AG04449 (cell line): ENCODE measurements at regions of chr3 and their contacts with region 1.

Region 1: GRCh38 chr3:36677331-36678007 is 86.9 kb downstream of the DCLK3 start:
- DNase-seq: peak; percentile 91
- H3K4me3 ChIP-seq: peak overlapping the region; percentile 39
- CTCF ChIP-seq: no peak

Region 2: DNA sequence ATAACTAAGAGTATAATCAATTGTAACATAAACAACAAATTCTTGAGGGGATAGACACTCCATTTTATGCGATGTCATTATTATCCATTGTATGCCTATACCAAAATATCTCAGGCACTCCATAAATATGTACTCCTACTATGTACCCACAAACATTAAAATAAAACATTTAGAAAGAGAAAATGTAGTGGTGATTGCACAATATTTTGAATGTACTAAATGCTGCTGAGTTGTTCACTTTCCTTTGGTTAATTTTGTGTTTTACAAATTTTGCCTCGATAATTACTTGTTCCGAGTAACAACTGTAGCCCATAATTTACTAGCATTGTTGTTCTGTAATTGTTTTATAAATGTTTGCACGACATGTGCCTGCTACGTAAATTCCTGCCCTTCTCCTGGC is 44.4 kb before region 1 on chr3:
- CTCF ChIA-PET with region 1: no interaction called
- POLR2A ChIA-PET with region 1: no interaction called
- DNase-seq: no peak
- H3K4me3 ChIP-seq: no peak overlapping the region
- CTCF ChIP-seq: no peak

Region 3: DNA sequence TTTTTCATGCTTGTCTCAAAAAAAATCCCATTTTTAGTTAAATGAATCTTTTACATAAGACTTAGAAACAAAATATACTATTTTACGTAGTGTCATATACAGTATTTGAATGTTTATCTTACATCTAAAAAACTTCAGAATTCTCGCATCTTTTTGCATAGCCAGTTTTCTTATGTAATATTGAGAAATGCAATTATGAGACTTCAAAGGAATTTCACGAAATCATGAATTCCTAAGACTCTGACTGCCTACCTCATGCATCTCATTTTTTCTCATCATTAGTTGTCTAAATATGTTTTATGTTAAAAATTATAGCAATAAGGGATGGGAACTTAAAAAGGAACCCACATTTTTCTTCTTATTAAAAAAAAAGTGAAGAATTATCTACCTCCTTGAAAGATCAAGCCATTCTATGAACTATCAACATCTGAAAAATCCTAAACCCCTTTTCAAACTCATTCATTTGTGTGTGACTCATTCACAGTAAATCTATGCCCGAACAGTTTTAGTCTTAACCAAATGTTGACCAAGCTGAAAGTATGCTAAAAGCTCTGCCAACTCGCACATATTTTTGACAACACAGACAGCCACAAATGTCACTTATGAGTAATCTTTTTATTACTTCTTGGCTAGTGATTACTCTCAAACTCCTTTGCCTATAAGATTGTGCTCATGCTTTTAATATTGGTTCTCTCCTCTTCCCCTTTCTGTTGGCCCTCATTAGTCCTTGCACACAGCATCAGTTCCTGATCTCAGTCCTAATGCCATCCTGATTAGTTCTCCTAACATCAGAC is 29.0 kb before region 1 on chr3:
- CTCF ChIA-PET with region 1: interaction called, 3 read pairs
- POLR2A ChIA-PET with region 1: interaction called, 11 read pairs
- DNase-seq: peak; percentile 94
- H3K4me3 ChIP-seq: no peak overlapping the region
- CTCF ChIP-seq: no peak

Region 4: GRCh38 chr3:36693670-36694069 is 16.2 kb after region 1 on chr3:
- CTCF ChIA-PET with region 1: interaction called, 14 read pairs
- POLR2A ChIA-PET with region 1: interaction called, 8 read pairs
- DNase-seq: no peak
- H3K4me3 ChIP-seq: no peak overlapping the region
- CTCF ChIP-seq: no peak

Region 5: GRCh38 chr3:36911990-36912804 is 234.7 kb after region 1 on chr3:
- CTCF ChIA-PET with region 1: no interaction called
- POLR2A ChIA-PET with region 1: no interaction called
- DNase-seq: no peak
- H3K4me3 ChIP-seq: no peak overlapping the region
- CTCF ChIP-seq: no peak